AG04449 (cell line): ENCODE measurements at regions of chr7 and their contacts with region 1.

Region 1: DNA sequence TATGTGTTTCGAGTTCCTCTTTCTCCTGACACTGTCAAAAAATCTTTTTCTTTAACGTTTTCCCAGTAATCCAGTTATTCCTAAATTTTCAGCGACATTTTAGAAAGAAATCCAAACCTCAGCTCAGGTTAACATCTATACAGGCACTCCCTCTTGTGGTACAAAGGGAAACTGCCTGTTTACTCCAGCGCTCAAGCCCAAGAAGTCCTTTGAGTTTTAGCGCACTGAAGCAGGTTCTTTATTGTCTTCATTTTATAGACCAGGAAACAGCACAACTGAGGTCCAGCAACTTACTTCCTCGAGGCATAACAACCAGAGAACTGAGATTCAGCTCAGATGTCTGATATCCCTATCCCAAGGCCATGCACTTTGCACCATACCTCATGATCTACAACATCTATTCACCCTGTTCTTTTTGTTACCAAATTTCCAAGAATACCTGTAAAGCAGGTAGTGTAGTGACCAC is 287.2 kb upstream of the MKLN1 start:
- DNase-seq: no peak
- H3K4me3 ChIP-seq: no peak overlapping the region
- CTCF ChIP-seq: peak; percentile 75

Region 2: DNA sequence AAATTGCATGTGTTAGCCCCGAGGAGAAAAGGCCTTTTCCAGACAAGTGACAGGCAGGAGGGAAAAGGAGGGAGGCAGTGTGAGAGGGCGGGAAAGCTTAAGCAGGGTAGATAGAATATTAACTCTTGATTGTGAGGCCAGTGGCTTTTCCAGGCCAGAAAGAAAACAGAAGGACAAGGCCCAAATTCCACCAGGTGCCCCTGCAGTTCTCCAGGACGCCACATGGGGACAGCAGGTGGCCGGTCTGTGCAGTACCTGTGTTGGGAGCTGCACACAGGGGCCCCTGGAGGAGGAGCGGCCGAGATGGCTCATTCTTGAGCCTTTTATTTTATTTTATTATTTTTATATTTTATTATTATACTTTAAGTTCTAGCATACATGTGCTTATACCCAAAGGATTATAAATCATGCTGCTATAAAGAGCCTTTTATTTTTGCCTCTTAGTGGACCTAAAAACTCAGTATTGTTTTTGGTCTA is 165.2 kb before region 1 on chr7:
- CTCF ChIA-PET with region 1: interaction called, 10 read pairs
- POLR2A ChIA-PET with region 1: no interaction called
- DNase-seq: no peak
- H3K4me3 ChIP-seq: no peak overlapping the region
- CTCF ChIP-seq: peak; percentile 85

Region 3: DNA sequence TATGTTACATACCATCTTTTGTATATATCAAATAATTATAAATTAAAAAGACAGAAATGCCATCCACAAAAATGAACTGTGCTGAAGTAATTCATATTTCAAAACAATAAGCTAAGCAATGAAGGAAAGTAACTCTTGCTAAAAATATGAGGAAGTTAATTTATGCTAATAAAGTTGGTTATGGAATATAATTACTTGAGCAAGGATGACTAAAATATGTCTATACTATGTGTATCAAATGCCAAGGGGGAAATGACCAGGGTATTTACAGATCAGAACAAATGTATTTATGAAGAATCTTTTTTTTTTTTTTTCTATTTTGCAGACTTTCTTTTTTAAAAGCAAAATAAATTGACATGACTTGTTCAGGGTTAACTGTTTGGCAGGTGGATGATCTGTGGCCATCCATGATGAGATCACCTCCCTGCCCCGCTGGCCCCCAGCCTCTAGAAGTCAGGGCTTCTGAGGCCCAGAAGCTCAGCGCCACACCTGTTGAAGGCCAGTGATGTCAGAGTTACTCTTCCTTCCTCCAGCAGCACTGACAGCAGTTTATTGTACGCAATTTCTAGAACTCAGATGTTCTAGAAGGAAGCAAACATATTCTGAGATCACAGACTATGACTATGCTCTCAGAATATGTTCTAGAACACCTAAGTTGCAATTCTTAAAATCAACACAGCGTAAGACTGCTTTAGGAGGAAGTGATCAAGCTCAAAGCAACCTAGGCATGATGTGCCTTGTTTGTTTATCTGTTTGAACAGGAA is 110.4 kb before region 1 on chr7:
- CTCF ChIA-PET with region 1: interaction called, 11 read pairs
- POLR2A ChIA-PET with region 1: no interaction called
- DNase-seq: no peak
- H3K4me3 ChIP-seq: no peak overlapping the region
- CTCF ChIP-seq: no peak

Region 4: DNA sequence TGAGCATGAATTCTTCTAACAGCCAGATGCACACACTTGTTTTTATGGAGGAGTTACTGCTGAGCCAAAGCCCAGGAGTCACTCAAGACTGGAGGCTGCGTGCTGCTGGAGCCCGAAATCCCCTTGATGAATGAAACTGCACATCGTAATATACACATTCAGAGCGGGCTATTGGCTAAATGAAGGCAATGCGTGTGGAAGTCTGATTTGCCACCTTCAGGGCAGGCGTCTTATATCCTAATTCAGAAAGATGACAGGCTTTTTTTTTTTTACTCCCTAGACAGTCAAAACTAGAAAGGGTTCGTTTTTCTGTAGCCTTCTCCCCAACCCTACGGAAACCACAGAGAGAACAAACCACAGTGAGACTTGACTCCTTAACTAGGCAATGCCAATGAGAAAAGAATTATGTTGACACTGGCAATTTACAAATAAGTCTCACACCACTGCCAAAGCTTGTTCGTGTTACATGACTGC is 79.3 kb before region 1 on chr7:
- CTCF ChIA-PET with region 1: interaction called, 17 read pairs
- POLR2A ChIA-PET with region 1: no interaction called
- DNase-seq: peak; percentile 57
- H3K4me3 ChIP-seq: peak overlapping the region; percentile 45
- CTCF ChIP-seq: no peak

Region 5: GRCh38 chr7:130988443-130988842 is 52.1 kb before region 1 on chr7:
- CTCF ChIA-PET with region 1: interaction called, 122 read pairs
- POLR2A ChIA-PET with region 1: no interaction called
- DNase-seq: no peak
- H3K4me3 ChIP-seq: no peak overlapping the region
- CTCF ChIP-seq: no peak

Region 6: DNA sequence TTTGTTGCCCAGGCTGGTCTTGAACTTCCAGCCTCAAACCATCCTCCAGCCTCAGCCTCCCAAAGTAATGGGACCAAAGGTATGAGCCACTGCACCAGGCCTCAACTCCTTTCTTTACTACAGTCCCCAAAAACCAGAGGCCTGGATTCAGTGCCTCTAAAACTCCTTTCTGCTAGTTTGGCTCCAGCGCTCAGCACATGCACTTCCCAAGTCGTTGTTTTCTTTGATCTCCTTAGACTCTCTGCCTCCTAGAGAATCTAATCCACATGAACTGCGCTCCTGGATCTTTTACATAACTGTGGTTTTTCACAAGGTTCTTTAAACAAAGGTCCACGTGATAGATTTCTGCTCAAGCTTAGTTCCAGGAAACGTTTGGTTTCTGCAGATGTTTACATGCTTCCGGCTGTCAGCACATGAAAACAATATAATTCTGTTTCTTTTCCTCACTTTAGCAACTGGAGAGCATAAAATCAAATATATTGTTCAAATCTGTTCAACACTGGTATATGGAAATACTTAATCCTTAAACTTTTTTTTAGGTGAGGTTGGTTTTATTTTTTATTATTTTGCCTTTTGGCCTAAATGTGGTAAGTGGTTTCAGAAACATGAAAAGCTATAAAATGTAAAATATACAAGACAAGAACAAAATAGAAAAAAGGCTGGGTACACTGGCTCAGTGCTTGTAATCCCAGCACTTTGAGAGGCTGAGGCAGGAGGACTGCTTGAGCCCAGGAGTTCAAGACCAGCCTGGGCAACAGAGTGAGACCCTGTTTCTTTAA is 16.7 kb after region 1 on chr7:
- CTCF ChIA-PET with region 1: interaction called, 22 read pairs
- POLR2A ChIA-PET with region 1: no interaction called
- DNase-seq: peak; percentile 56
- H3K4me3 ChIP-seq: no peak overlapping the region
- CTCF ChIP-seq: no peak